ENCODE measurements at regions of chr22 and their contacts with region 1.

Region 1: GRCh38 chr22:31970490-31971444 is 26.4 kb downstream of the YWHAH start:
- DNase-seq: peak; percentile 90

Region 2: DNA sequence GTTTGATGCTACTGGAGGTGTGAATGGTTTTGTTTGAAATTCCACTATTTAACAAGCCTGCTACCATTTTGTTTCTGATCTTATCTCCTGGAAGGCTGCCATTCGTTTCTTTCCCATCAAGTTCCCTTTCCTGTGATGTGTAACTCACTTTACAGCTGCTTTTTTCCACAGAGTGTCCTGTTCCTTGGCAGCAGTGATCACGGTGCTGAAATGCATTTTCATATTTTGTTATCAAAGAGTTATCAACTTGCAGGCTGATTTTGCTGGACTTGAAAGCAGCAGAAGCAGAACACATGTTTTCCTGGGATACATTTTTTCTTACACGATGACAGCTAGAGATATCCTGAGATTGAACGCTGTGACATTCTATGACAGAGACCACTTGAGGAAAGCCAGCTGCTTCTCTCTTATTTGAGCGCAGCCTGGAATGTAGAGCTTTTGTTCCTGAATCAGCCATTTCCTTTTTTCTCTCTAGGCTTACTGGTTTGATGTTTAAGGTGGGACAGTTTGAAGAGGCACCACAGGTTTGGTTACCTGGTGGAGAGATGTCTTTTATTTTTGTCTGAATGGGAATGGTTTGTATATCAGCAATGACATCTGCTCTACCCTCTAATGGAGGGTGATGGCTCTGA is 255.5 kb before region 1 on chr22:
- in situ Hi-C with region 1: loop called (anchors 25 kb)
- DNase-seq: no peak

Region 3: GRCh38 chr22:31749636-31750364 is 221.0 kb before region 1 on chr22 and contains the start of gene PRR14L:
- in situ Hi-C with region 1: loop called (anchors 10 kb)
- DNase-seq: peak; percentile 98
- total RNA-seq, gene PRR14L: 3.9 and 5.3 TPM in 2 replicates

Region 4: GRCh38 chr22:31846161-31847115 is 124.3 kb before region 1 on chr22:
- in situ Hi-C with region 1: no loop called
- DNase-seq: no peak